ENCODE measurements at regions of chr17 and their contacts with region 1.

Region 1: GRCh38 chr17:38454516-38454915 is 26.3 kb downstream of the ARHGAP23 start:
- DNase-seq: peak; percentile 69 to 98 (median 96)
- H3K4me3 ChIP-seq: peak overlapping the region; percentile 5 to 65 (median 43)
- H3K27ac ChIP-seq: peak overlapping the region in 58 of 59 donors; percentile 27 to 98 (median 94)
- H3K27me3 ChIP-seq: peaks cover 0 to 2% (median 0%) of the 10 kb centered on the region in 45 donors
- CTCF ChIP-seq: peak in 9 of 56 donors; percentile 9 to 43 (median 24)

Region 2: GRCh38 chr17:37683454-37683984 is 771.0 kb before region 1 on chr17:
- intact Hi-C with region 1: no loop called
- DNase-seq: no peak
- H3K4me3 ChIP-seq: no peak overlapping the region
- H3K27ac ChIP-seq: no peak overlapping the region
- H3K27me3 ChIP-seq: peaks cover 0 to 3% (median 0%) of the 10 kb centered on the region in 45 donors
- CTCF ChIP-seq: no peak

Region 3: GRCh38 chr17:38464723-38465390 is 10.3 kb after region 1 on chr17:
- intact Hi-C with region 1: loop called in 1 of 2 experiments (anchors 1 kb)
- DNase-seq: peak; percentile 82 to 93 (median 92)
- H3K4me3 ChIP-seq: peak overlapping the region; percentile 25 to 67 (median 53)
- H3K27ac ChIP-seq: peak overlapping the region; percentile 62 to 98 (median 93)
- H3K27me3 ChIP-seq: no peaks in the 10 kb centered on the region
- CTCF ChIP-seq: peak in 1 of 56 donors; percentile 15

Measured in dorsolateral prefrontal cortex (tissue), 120 donors.